ENCODE measurements at regions of chr11 and their contacts with region 1.

Region 1: GRCh38 chr11:35662649-35663407 is at the start of gene TRIM44:
- DNase-seq: peak; percentile 20 to 95 (median 88)

Region 2: GRCh38 chr11:35605711-35606110 is 57.1 kb before region 1 on chr11:
- intact Hi-C with region 1: no loop called
- DNase-seq: peak in 41 of 42 donors; percentile 10 to 80 (median 46)

Region 3: GRCh38 chr11:35815556-35816315 is 152.9 kb after region 1 on chr11:
- intact Hi-C with region 1: loop called (anchors 10 kb)
- DNase-seq: no peak

Measured in head of caudate nucleus (tissue), 42 donors.